Activated CD8-positive, alpha-beta T cell treated with anti-CD3 and anti-CD28 coated beads for 36 hours (primary cell): ENCODE measurements at regions of chr19 and their contacts with region 1.

Region 1: DNA sequence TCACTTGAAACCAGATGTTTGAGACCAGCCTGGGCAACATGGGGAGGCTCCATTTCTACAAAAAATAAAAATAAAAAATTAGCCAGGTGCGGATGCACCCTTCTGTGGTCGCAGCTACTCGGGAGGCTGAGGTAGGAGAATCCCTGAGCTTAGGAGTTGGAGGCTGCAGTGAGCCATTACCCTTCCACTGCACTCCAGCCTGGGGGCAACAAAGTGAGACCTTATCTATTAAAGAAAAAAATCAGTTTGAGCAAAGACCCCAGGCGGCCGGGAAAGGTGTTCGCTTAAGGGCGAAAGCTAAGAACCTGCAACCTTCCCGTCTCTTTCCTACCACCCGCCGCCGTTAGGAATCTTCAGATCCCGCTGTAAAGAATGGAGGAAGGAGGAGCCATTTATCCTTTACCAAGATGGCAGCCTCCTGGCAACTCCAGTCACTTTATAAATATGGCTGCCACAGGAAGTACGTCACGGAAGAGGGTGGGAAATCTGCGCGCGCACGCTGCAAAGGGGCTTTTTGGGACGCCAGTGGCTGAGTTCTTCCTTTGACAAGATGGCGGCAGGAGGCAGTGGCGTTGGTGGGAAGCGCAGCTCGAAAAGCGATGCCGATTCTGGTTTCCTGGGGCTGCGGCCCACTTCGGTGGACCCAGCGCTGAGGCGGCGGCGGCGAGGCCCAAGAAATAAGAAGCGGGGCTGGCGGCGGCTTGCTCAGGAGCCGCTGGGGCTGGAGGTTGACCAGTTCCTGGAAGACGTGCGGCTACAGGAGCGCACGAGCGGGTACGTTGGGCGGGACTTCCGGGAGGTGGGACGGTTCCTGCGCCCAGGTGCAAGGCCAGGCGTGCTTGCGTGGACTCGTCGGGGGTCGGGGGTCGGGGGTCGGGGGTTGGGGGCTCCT is at the start of gene NOP53:
- DNase-seq: peak; percentile 98
- ATAC-seq: peak; percentile 75
- H3K4me3 Mint-ChIP-seq: peak within 1 kb of the TSS; percentile 99
- H3K27ac Mint-ChIP-seq: peak within 1 kb of the TSS; percentile 100
- H3K4me1 Mint-ChIP-seq: peaks cover 49% of the 10 kb centered on the region
- H3K27me3 Mint-ChIP-seq: no peaks in the 10 kb centered on the region
- CTCF ChIP-seq: no peak
- total RNA-seq, gene NOP53: 300 to 301 TPM

Region 2: DNA sequence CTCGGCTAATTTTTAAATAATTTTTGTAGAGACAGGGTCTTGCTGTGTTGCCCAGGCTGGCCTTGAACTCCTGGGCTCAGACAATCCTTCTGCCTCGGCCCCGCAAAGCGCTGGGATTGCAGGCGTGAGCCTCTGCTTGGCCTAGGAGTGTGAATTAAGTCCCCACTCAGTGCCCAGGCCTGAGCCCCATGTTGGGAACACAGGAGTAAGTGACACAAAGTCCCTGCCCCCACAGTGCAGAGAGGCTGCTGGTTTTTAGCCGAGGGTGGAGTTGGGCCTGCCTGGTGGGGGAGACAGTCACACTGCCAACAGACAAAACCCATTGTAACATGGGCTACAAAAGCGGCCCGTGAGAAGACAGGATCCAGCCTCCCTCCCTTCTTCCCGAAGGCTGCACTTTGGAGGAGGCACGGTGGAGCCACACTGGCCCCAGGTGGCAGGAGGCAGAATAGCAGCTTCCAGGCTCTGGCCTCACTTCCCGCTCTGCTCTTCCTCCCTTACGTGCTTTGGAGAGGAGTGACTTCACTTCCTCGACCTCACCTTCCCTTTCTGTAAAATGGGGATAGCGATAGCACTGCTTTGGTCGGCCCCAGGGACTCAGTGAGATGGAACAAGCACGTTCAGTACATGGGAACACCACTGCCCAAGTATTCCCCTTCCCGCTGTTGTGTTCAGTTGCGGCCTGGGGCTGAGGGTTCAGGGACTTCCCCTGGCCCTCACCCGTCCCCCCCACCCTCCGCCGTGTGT is 47.2 kb before region 1 on chr19:
- CTCF ChIA-PET with region 1: interaction called, 11 read pairs
- POLR2A ChIA-PET with region 1: no interaction called
- intact Hi-C with region 1: no loop called
- DNase-seq: peak; percentile 69
- ATAC-seq: peak; percentile 87
- H3K4me3 Mint-ChIP-seq: no peak overlapping the region
- H3K27ac Mint-ChIP-seq: no peak overlapping the region
- H3K4me1 Mint-ChIP-seq: no peaks in the 10 kb centered on the region
- H3K27me3 Mint-ChIP-seq: no peaks in the 10 kb centered on the region
- CTCF ChIP-seq: peak; percentile 96

Region 3: DNA sequence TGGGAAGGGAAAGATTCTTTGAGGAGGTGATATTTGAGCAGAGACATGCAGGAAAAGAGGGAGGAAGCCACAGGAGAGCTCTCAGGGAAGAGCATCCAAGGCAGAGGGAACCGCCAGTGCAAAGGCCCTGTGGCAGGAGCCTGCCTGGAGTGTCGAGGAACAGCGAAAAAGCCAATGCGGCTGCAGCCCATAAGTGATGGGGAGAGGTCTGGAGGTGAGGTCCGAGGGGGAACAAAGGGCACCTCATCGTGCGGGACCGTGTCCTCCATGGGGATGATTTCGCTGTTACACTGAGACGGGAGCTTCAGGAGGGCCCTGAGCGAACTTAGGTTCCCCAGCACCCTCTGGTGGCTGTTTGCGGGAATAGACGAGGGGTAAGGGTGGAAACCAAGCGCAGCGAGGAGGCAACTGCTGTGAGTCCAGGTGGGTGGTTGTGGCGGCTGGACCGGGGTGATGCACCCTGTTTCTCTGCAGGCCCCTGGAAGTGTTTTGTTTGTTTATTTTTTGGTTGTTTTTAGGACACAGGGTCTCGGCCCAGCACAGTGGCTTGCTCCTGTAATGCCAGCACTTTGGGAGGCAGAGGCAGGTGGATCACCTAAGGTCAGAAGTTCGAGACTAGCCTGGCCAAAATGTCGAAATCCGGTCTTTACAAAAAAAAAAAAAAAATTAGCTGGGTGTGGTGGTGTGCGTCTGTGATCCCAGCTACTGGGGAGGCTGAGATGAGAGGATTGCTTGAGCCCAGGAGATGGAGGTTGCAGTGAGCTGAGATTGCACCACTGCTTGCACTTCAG is 37.9 kb before region 1 on chr19:
- CTCF ChIA-PET with region 1: interaction called, 168 read pairs
- POLR2A ChIA-PET with region 1: interaction called, 3 read pairs
- intact Hi-C with region 1: loop called (anchors 2 kb)
- DNase-seq: peak; percentile 88
- ATAC-seq: peak; percentile 99
- H3K4me3 Mint-ChIP-seq: no peak overlapping the region
- H3K27ac Mint-ChIP-seq: no peak overlapping the region
- H3K4me1 Mint-ChIP-seq: no peaks in the 10 kb centered on the region
- H3K27me3 Mint-ChIP-seq: peaks cover 9% of the 10 kb centered on the region
- CTCF ChIP-seq: peak; percentile 88

Region 4: DNA sequence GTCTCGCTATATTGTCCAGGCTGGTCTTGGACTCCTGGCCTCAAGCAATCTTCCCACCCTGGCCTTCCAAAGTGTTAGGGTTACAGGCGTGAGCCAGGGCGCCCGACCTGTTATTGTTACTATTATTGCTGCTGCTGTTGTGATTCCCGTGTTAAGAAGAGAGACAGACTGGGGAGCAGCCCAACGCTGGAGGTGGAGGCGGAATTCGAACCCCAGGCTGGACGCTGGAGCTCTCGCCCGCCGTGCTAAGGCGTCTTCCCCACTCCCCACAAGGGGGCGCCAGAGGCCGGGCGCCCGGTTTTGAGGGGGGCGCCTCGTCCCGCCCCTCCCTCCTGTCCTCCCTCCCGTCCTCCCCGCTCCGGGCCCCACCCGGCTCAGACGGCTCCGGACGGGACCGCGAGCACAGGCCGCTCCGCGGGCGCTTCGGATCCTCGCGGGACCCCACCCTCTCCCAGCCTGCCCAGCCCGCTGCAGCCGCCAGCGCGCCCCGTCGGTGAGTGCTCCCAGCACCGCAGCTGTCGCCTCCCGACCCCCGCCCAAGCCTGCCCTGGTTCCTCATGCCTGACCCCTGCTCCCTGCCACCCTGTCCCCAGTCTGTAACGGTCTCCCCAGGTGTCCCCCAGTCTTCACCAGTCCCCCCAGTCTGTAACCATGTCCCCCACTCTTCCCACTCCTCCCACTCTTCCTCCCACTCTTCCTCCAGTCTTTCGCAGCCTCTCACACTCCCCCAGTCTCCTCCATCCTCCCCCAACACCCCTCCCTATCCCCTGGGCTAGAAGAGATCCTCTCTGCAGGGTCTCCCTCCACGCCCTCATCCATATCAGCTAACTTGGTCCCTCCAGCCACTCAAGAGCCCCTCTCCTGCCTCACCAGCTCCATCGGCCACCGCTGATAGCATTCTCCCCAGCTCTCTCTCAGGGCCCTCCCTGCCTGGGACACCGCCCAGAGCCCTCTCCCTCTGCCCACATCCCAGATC is 31.9 kb before region 1 on chr19 and contains the start of gene EHD2:
- CTCF ChIA-PET with region 1: interaction called, 168 read pairs
- POLR2A ChIA-PET with region 1: interaction called, 7 read pairs
- intact Hi-C with region 1: loop called (anchors 2 kb)
- DNase-seq: peak; percentile 57
- ATAC-seq: peak; percentile 88
- H3K4me3 Mint-ChIP-seq: peak within 1 kb of the TSS; percentile 16
- H3K27ac Mint-ChIP-seq: no peak within 1 kb of the TSS
- H3K4me1 Mint-ChIP-seq: peaks cover 2% of the 10 kb centered on the region
- H3K27me3 Mint-ChIP-seq: peaks cover 32% of the 10 kb centered on the region
- CTCF ChIP-seq: peak; percentile 94
- total RNA-seq, gene EHD2: 1.1 to 1.4 TPM

Region 5: GRCh38 chr19:47722749-47723140 is 22.5 kb before region 1 on chr19:
- CTCF ChIA-PET with region 1: interaction called, 17 read pairs
- POLR2A ChIA-PET with region 1: interaction called, 3 read pairs
- intact Hi-C with region 1: no loop called
- DNase-seq: no peak
- ATAC-seq: no peak
- H3K4me3 Mint-ChIP-seq: no peak overlapping the region
- H3K27ac Mint-ChIP-seq: no peak overlapping the region
- H3K4me1 Mint-ChIP-seq: no peaks in the 10 kb centered on the region
- H3K27me3 Mint-ChIP-seq: peaks cover 14% of the 10 kb centered on the region
- CTCF ChIP-seq: no peak

Region 6: DNA sequence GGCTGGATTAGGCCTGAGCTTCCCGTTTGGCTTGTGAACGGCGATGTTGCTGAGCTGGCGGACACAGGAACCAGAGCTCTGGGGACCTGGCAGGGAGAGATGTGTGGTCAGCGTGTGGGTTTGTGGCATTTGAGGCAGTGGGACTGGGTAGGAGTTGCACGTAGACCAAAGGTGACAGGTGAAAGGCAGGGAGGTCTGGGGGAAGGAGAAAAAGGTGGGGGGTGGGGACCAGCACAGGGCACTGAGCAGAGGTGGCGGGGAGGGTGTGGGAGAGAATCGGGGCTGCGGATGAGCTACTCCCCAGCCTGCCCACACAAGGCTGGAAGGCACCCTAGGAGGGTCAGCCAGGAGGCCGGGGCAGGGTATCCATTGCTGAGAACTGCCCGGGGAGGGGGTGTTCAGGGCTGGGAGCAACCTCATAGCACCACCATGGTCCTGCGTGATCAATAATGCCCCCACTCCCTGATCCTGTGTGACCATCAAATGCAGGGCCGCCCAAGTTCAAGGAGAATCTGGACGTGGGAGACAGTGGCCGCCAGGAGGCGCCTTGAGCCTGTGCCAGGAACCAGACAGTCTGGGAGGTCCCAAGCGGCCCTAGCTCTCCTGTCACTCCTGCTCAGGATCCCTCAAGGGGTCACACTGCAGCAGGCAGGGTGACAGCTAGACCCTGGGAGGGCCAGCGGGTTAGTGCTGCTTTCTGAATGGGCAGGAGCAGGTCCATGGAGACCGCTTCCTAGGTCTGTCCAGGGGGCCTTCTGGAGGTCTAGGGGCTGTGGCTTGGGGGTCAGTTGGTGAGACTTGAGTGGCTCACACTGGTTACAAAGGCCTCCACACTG is 20.5 kb after region 1 on chr19:
- CTCF ChIA-PET with region 1: interaction called, 8 read pairs
- POLR2A ChIA-PET with region 1: interaction called, 69 read pairs
- intact Hi-C with region 1: no loop called
- DNase-seq: peak; percentile 61
- ATAC-seq: peak; percentile 69
- H3K4me3 Mint-ChIP-seq: no peak overlapping the region
- H3K27ac Mint-ChIP-seq: no peak overlapping the region
- H3K4me1 Mint-ChIP-seq: peaks cover 3% of the 10 kb centered on the region
- H3K27me3 Mint-ChIP-seq: no peaks in the 10 kb centered on the region
- CTCF ChIP-seq: peak; percentile 54